Activated CD4-positive, alpha-beta T cell treated with anti-CD3 and anti-CD28 coated beads, Interleukin-2, amount 10 ng/mL, durations not matched to agents 24 days and 14 days (primary cell): ENCODE measurements at regions of chr15 and their contacts with region 1.

Region 1: GRCh38 chr15:101127506-101128076 is 124.3 kb downstream of the CHSY1 start:
- DNase-seq: peak; percentile 86
- H3K4me3 Mint-ChIP-seq: peak overlapping the region; percentile 77
- H3K27ac Mint-ChIP-seq: peak overlapping the region; percentile 93
- H3K4me1 Mint-ChIP-seq: peaks cover 61% of the 10 kb centered on the region
- H3K27me3 Mint-ChIP-seq: peaks cover 5% of the 10 kb centered on the region

Region 2: GRCh38 chr15:101088788-101089583 is 38.6 kb before region 1 on chr15:
- intact Hi-C with region 1: loop called (anchors 5 kb)
- DNase-seq: peak; percentile 95
- H3K4me3 Mint-ChIP-seq: no peak overlapping the region
- H3K27ac Mint-ChIP-seq: no peak overlapping the region
- H3K4me1 Mint-ChIP-seq: peaks cover 9% of the 10 kb centered on the region
- H3K27me3 Mint-ChIP-seq: peaks cover under 1% of the 10 kb centered on the region

Region 3: DNA sequence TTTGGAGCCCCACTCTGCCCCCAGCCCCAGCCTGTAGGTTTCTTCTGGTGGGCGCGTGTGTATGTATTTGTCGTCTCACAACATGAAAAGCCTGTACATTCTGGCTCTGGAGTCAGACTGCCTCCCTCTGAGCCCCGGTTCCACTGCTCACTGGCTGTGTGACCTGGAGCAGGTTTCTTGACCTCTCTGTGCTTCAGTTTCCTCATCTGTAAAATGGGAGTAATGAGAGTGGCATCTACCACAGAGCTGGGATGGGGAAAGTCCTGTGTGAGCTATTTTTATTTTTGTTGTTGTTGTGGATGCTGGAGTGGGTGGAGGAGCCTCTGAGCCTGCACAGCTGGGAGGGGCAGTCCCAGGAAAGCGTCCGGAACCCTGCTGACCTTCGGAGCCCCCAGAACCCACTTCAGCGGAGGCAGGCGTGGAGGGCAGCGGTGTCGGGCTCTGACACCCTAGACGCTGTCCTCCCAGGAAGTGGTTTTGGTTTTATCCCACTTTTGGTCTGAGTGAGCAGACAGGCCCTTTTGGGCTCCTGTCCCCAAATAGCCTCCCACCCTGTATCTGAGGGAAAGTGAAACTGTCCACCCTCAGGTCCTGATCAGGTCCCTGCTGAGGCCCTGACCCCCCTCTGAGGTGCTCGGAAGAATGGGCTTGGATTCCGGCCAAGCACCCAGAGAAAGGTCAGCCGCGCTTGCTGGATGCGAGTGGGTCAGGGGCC is 20.7 kb after region 1 on chr15:
- intact Hi-C with region 1: no loop called
- DNase-seq: no peak
- H3K4me3 Mint-ChIP-seq: no peak overlapping the region
- H3K27ac Mint-ChIP-seq: no peak overlapping the region
- H3K4me1 Mint-ChIP-seq: peaks cover 41% of the 10 kb centered on the region
- H3K27me3 Mint-ChIP-seq: no peaks in the 10 kb centered on the region

Region 4: GRCh38 chr15:101159096-101159935 is 31.7 kb after region 1 on chr15:
- intact Hi-C with region 1: loop called (anchors 1 kb)
- DNase-seq: peak; percentile 80
- H3K4me3 Mint-ChIP-seq: peak overlapping the region; percentile 64
- H3K27ac Mint-ChIP-seq: peak overlapping the region; percentile 90
- H3K4me1 Mint-ChIP-seq: peaks cover 35% of the 10 kb centered on the region
- H3K27me3 Mint-ChIP-seq: no peaks in the 10 kb centered on the region

Region 5: DNA sequence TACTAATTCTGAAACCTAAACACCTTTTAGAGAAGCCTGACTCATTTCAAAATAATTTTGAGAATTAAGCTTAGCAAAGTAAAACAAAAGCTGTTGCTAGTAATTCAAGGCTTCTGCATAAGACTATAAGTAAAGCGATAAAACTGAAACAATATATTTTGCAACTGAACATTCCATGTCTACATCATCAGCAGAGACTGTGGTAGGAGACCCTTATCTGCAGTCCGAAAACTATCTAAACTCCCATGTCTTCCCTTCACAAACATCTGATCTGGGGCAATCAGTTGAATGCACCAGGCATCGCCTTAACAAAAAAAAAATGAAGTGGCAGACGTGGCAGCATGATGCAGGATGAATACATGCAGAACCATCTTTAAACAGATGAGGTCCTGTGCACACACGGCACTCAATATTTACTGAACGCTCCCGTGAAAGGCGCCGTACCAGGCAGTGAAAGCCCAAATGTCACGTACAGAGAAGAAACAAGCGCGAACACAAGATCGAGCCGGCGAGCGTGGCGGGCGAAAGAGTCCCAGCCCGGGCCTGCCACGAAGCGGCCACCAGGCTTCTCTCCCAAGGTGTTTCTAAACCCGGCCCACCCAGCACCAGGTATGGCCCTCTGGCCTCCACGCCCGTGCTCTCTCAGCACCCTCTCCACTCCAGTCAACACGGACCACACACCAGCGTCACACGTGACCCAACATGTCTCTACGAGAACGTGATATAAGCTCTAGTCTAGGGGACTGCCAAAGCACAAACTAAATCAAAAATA is 61.2 kb after region 1 on chr15:
- intact Hi-C with region 1: loop called (anchors 5 kb)
- DNase-seq: no peak
- H3K4me3 Mint-ChIP-seq: peak overlapping the region; percentile 67
- H3K27ac Mint-ChIP-seq: peak overlapping the region; percentile 91
- H3K4me1 Mint-ChIP-seq: peaks cover 79% of the 10 kb centered on the region
- H3K27me3 Mint-ChIP-seq: no peaks in the 10 kb centered on the region

Region 6: DNA sequence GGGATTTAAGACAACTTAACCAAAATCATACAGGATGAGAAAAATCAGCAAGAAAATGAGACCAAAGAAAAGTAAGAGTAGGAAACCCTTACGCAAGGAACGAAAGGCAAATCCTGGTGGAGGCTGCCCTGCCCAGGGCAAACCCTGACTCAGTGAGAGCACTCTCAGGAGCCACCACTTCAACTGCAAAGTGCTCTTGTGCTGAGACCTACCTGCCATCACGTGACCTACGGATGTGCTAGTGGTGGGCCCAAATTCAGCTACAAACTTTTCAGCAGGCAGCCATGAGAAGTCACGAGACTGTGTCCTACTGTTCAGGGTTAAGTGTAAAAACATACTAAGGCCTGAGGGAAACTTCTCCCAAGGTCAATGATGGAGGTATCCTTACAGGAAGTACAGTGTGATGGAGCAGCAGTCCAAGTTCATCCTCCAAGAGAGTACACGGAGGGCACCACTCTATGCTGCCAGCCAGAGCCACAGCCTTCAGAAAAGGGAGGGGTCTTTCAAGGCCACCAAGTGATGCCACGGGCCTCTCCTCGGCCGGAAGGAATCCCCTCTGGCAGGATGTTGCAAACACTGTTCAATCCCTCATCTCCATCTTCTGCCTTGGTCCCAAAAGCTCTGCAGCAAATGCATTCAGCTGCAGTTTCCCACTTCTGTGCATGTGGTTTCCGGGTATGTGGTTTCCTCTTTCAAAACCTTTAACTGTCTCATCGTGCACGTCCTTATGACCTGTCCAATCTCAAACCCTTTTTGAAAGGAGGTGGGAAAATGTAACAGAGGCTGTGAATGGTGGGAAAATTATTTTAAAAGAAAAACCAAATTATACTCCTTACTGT is 114.8 kb after region 1 on chr15:
- intact Hi-C with region 1: loop called (anchors 2 kb)
- DNase-seq: peak; percentile 91
- H3K4me3 Mint-ChIP-seq: peak overlapping the region; percentile 70
- H3K27ac Mint-ChIP-seq: peak overlapping the region; percentile 90
- H3K4me1 Mint-ChIP-seq: peaks cover 83% of the 10 kb centered on the region
- H3K27me3 Mint-ChIP-seq: no peaks in the 10 kb centered on the region